SK-N-SH (cell line): ENCODE measurements at regions of chr1 and their contacts with region 1.

Region 1: GRCh38 chr1:37682334-37682987 is 9.9 kb upstream of the CDCA8 start:
- DNase-seq: peak; percentile 63
- H3K4me3 ChIP-seq: peak overlapping the region in 1 of 2 experiments; percentile 28; a peak in 1 of 4 replicates
- H3K27ac ChIP-seq: no peak overlapping the region
- H3K4me1 ChIP-seq: 0 out of 4 replicates have a peak, but pooled peaks cover 0 to 2% of the 10 kb centered on the region in 2 experiments
- H3K27me3 ChIP-seq: no peaks in the 10 kb centered on the region
- CTCF ChIP-seq: peak; percentile 95
- EP300 ChIP-seq: no peak
- RAD21 ChIP-seq: peak; percentile 92

Region 2: DNA sequence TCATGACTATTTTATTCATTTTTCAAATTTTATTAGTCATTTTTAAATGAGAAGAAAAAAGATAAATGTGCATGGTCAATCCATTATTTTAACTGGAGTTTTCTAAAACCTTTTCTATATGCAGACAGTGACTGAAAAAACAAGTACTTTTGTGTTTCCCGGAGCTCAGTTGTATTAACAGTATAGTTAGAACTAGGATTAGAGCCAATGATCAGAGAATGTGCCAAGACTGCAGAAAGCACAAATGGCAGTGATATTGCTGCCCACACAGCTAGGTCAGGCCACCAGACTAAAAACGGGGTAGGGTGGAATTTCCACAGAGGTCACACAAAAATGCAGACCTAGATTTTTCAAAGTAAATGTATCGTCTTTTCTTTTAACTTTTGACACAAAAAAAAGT is 485.1 kb before region 1 on chr1:
- CTCF ChIA-PET with region 1: no interaction called
- POLR2A ChIA-PET with region 1: no interaction called
- DNase-seq: no peak
- H3K4me3 ChIP-seq: no peak overlapping the region
- H3K27ac ChIP-seq: no peak overlapping the region
- H3K4me1 ChIP-seq: no peaks in the 10 kb centered on the region
- H3K27me3 ChIP-seq: no peaks in the 10 kb centered on the region
- CTCF ChIP-seq: no peak
- EP300 ChIP-seq: no peak
- RAD21 ChIP-seq: no peak

Region 3: DNA sequence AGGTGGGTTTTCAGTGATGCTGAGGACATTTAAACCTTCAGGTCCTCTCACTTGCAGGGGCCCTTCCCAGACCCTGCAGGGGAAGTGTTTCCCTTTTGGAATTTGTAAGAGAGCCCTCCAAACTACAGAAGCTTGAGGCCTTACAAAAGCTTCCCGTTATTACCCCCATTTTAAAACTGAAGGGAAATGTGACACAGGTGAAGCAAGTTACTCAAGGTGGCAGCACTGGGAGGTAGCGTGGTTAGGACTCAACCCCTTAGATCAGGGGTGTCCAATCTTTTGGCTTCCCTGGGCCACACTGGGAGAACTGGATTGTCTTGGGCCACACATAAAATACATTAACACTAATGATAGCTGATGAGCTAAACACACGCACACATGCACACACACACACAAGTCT is 223.9 kb before region 1 on chr1:
- CTCF ChIA-PET with region 1: interaction called, 14 read pairs
- POLR2A ChIA-PET with region 1: no interaction called
- DNase-seq: no peak
- H3K4me3 ChIP-seq: no peak overlapping the region
- H3K27ac ChIP-seq: no peak overlapping the region
- H3K4me1 ChIP-seq: no peaks in the 10 kb centered on the region; a peak in 1 of 4 replicates
- H3K27me3 ChIP-seq: no peaks in the 10 kb centered on the region
- CTCF ChIP-seq: no peak
- EP300 ChIP-seq: no peak
- RAD21 ChIP-seq: no peak

Region 4: GRCh38 chr1:37595440-37596319 is 86.8 kb before region 1 on chr1 and contains the start of gene GNL2:
- CTCF ChIA-PET with region 1: interaction called, 358 read pairs
- POLR2A ChIA-PET with region 1: no interaction called
- DNase-seq: peak; percentile 96
- H3K4me3 ChIP-seq: peak within 1 kb of the TSS; percentile 84 to 87
- H3K27ac ChIP-seq: peak within 1 kb of the TSS; percentile 77 to 80
- H3K4me1 ChIP-seq: peaks cover 10 to 24% of the 10 kb centered on the region in 2 experiments; a peak in 3 of 4 replicates
- H3K27me3 ChIP-seq: no peaks in the 10 kb centered on the region
- CTCF ChIP-seq: no peak
- EP300 ChIP-seq: no peak
- RAD21 ChIP-seq: no peak
- polyA plus RNA-seq, gene GNL2: 37.6 and 43.7 TPM in 2 replicates

Region 5: GRCh38 chr1:37661401-37661800 is 21.1 kb before region 1 on chr1:
- CTCF ChIA-PET with region 1: interaction called, 28 read pairs
- POLR2A ChIA-PET with region 1: interaction called, 3 read pairs
- DNase-seq: no peak
- H3K4me3 ChIP-seq: no peak overlapping the region
- H3K27ac ChIP-seq: no peak overlapping the region
- H3K4me1 ChIP-seq: peaks cover 0 to 16% of the 10 kb centered on the region in 2 experiments; a peak in 1 of 4 replicates
- H3K27me3 ChIP-seq: 0 out of 2 replicates have a peak, but pooled peaks cover 1% of the 10 kb centered on the region
- CTCF ChIP-seq: no peak
- EP300 ChIP-seq: no peak
- RAD21 ChIP-seq: no peak

Region 6: GRCh38 chr1:37667023-37667761 is 15.3 kb before region 1 on chr1:
- CTCF ChIA-PET with region 1: interaction called, 42 read pairs
- POLR2A ChIA-PET with region 1: interaction called, 3 read pairs
- DNase-seq: peak; percentile 65
- H3K4me3 ChIP-seq: no peak overlapping the region
- H3K27ac ChIP-seq: no peak overlapping the region
- H3K4me1 ChIP-seq: peaks cover 0 to 11% of the 10 kb centered on the region in 2 experiments; a peak in 1 of 4 replicates
- H3K27me3 ChIP-seq: 0 out of 2 replicates have a peak, but pooled peaks cover 13% of the 10 kb centered on the region
- CTCF ChIP-seq: no peak
- EP300 ChIP-seq: no peak
- RAD21 ChIP-seq: peak; percentile 26; the same call in 1 of the 2 replicates

Region 7: GRCh38 chr1:37755290-37755689 is 72.8 kb after region 1 on chr1:
- CTCF ChIA-PET with region 1: no interaction called
- POLR2A ChIA-PET with region 1: no interaction called
- DNase-seq: no peak
- H3K4me3 ChIP-seq: no peak overlapping the region
- H3K27ac ChIP-seq: no peak overlapping the region
- H3K4me1 ChIP-seq: no peaks in the 10 kb centered on the region; a peak in 1 of 4 replicates
- H3K27me3 ChIP-seq: peaks cover 22% of the 10 kb centered on the region
- CTCF ChIP-seq: no peak
- EP300 ChIP-seq: no peak
- RAD21 ChIP-seq: no peak